ENCODE measurements at regions of chr14 and their contacts with region 1.

Region 1: GRCh38 chr14:77067632-77068514 is 30.2 kb upstream of the CIPC start:
- DNase-seq: peak; percentile 77
- CTCF ChIP-seq: peak; percentile 94

Region 2: DNA sequence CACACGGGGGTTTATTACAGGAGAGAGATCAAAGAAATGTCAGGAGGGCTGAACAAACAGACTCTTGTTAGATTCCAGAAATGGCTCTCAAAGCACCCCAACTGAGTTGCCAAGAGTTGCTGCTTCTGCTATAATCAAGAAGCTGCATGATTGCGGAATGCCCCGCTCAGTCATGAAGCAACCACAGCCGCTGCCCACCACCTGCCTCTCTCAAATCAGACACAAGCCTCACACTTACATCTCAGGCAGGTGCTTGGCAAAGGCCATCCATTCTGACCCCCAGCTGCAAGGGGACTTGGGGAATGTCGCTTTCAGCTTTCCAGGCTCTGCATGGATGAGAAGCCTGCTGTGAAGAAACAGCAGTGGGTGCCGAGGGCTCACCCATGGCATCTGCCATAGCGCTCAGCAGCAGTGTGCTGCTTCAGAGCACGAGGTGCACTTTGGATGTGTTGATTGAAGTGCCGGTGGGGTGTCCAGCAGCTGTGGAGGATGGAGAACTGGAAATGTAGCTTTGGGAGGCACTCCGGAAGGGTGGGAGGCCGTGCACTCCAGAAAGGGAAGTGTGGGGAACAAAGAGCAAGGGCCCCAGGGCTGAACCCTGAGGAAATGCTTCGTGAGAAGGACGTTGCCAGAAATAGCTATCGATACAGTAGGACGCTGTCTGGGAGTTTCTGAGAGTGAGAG is 204.0 kb before region 1 on chr14:
- CTCF ChIA-PET with region 1: interaction called, 14 read pairs
- POLR2A ChIA-PET with region 1: no interaction called
- DNase-seq: peak; percentile 38
- CTCF ChIP-seq: no peak

Region 3: DNA sequence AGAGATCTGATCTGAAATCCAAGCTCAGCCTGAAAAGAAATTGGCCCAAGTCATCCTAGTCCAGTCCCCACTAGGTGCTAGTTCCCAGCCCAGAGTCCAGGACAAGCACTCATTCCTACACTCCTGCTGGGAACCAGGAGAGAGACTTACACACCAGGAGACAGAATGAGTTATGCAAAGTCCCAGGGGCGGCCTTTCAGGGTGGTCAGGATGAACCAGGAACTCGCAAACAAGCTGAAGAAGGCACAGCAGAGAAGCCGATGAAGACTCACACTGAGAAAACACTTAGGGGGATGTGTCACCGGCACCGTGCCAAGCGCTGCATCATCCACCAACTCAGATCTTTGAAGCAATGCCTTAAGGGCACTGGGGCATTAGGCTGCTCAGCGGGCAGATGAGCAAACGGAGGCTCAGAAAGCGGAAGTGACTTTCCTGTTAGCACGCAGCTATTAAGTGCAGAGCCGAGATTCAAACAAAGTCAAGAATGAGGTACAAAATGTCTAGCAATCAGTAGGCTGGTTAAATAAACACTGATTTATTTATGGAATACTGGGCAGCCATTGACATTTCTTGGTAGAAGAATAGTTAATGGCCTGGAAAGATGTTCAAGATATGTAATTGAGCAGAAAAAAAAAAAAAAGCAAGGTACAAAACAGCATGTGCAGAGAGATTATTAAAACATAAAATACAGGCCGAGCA is 163.0 kb before region 1 on chr14:
- CTCF ChIA-PET with region 1: interaction called, 399 read pairs
- POLR2A ChIA-PET with region 1: no interaction called
- DNase-seq: peak; percentile 75
- CTCF ChIP-seq: no peak

Region 4: GRCh38 chr14:76947078-76947837 is 120.6 kb before region 1 on chr14:
- CTCF ChIA-PET with region 1: interaction called, 13 read pairs
- POLR2A ChIA-PET with region 1: no interaction called
- DNase-seq: peak; percentile 87
- CTCF ChIP-seq: peak; percentile 63

Region 5: DNA sequence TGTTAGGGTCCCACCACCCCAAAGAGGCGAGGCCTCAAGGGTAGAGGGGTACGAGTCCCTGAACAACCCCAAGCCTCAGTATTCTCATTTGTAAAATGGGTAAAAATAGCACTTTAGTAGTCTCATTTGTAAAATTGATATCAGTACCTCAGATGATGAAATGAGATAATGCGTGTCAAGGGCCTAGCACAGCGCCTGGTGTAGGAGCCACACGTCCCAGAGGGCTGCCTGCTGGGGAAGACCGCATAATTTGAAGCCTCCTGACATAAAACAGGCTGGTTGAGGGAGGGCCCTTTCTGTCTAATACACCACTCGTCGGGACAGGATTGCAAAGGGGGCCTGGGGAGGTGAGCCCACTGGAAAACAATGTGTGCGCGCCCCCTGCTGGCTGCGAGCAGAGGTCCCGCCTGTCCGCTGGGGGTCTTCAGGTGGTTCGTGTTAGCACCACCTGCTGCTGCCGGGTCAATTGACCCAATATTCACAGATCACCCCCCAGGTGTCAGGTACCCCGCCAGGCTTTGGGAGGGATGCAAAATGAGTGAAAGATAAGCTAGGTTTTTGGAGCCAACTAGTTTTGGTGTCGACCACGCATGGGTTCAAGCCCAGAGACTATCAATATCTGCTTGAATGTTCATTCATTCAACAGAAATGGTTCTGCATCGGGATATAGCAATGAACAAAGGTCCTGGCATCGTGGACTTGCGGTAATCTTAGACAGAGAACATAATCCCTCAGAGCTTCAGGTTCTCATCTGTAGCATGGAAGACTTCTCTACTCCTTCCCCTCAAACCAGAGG is 14.6 kb before region 1 on chr14:
- CTCF ChIA-PET with region 1: interaction called, 72 read pairs
- POLR2A ChIA-PET with region 1: no interaction called
- DNase-seq: peak; percentile 83
- CTCF ChIP-seq: peak; percentile 84

Region 6: GRCh38 chr14:77097700-77098528 is 30.0 kb after region 1 on chr14 and contains the start of gene CIPC:
- CTCF ChIA-PET with region 1: interaction called, 37 read pairs
- POLR2A ChIA-PET with region 1: interaction called, 5 read pairs
- DNase-seq: peak; percentile 98
- CTCF ChIP-seq: no peak